A673 (cell line): ENCODE measurements at regions of chr14 and their contacts with region 1.

Region 1: DNA sequence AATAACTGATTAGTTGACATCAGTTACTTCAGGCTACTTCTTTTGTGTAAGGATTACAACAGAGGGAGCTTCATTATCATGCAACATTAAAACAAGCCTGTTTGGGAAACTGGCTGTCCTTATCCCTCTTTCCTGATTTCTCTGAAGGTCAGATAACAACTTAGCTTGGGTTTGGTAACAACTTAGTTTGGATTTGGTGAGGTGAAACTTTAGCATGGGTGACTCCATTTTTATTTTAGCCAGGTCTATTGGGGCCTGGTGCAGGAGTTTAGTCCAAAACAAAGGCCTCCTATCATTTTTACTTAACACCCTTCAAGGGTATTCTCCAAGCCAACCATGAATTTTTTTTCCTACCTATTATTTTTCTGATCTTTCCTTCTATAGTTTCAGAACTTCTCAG is 1.1 kb upstream of the ZFYVE1 start:
- DNase-seq: no peak
- H3K4me3 ChIP-seq: no peak overlapping the region
- H3K27ac ChIP-seq: no peak overlapping the region
- H3K4me1 ChIP-seq: peaks cover 7% of the 10 kb centered on the region
- H3K27me3 ChIP-seq: no peaks in the 10 kb centered on the region
- CTCF ChIP-seq: no peak

Region 2: DNA sequence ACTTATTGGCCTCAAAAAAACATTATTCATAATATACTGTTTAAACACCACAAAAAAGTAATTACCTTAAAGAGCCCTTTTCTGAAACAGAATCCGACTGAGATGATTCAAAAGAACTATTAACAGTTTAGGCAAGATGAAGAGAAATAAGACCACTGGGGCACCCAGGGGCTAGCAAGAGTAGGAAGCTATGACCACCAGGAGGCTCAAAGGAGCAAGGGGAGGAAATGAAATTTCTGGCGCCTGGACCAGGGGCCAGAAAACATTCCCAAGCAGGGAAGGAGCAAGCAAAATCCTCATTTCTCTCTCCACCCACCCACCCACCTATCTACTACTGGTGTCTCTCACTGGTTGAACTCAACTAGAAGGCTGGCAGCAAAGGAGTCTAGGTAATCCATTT is 108.0 kb before region 1 on chr14:
- CTCF ChIA-PET with region 1: no interaction called
- POLR2A ChIA-PET with region 1: interaction called, 10 read pairs
- intact Hi-C with region 1: no loop called
- DNase-seq: no peak
- H3K4me3 ChIP-seq: no peak overlapping the region
- H3K27ac ChIP-seq: no peak overlapping the region
- H3K4me1 ChIP-seq: no peaks in the 10 kb centered on the region
- H3K27me3 ChIP-seq: no peaks in the 10 kb centered on the region
- CTCF ChIP-seq: peak; percentile 31; the same call in 1 of the 2 replicates

Region 3: DNA sequence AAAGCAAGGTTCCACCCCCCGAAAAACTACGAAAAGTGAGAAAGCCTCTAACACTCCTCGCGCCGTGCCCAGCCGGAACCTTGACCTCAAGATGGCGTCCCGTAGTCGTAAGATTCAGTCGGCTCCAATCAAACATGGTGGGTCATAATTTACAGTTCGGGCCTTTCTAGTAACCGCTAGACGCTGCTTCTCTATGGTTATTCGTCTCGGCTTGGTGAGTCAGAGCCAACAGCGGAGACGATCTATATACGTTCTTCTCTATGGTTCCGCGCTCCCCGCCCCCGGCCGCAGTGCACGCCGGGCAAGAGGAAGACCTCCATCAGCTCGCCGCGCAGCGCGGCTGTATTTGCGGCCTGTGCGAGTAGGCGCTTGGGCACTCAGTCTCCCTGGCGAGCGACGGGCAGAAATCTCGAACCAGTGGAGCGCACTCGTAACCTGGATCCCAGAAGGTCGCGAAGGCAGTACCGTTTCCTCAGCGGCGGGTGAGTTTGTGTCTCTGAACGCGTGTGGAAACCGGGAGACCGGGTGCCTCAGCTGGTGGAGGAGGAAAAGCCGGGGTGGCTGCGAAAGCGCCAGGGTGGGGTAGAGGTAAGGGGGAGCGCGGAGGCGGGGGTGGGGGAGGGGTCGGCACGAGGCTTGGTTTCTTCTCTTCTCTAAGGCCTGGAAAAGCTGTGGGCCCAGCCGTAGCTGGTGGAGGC is 30.4 kb after region 1 on chr14 and contains the start of gene RBM25:
- CTCF ChIA-PET with region 1: no interaction called
- POLR2A ChIA-PET with region 1: no interaction called
- intact Hi-C with region 1: loop called (anchors 2 kb)
- DNase-seq: peak; percentile 99
- H3K4me3 ChIP-seq: peak within 1 kb of the TSS; percentile 65
- H3K27ac ChIP-seq: peak within 1 kb of the TSS; percentile 93
- H3K4me1 ChIP-seq: peaks cover 9% of the 10 kb centered on the region
- H3K27me3 ChIP-seq: no peaks in the 10 kb centered on the region
- CTCF ChIP-seq: peak; percentile 27; the same call in 1 of the 2 replicates
- total RNA-seq, gene RBM25: 112 and 123 TPM in 2 replicates